Activated naive CD8-positive, alpha-beta T cell treated with anti-CD3 and anti-CD28 coated beads, Interleukin-2, amount 10 ng/mL, durations not matched to agents 7 days and 5 days (primary cell): ENCODE measurements at regions of chr11 and their contacts with region 1.

Region 1: GRCh38 chr11:85627998-85628770 is at the start of gene TMEM126B:
- DNase-seq: peak; percentile 94
- ATAC-seq: peak; percentile 99
- H3K4me3 Mint-ChIP-seq: peak within 1 kb of the TSS; percentile 97
- H3K27ac Mint-ChIP-seq: peak within 1 kb of the TSS; percentile 95
- H3K4me1 Mint-ChIP-seq: peaks cover 29% of the 10 kb centered on the region
- H3K27me3 Mint-ChIP-seq: peaks cover 2% of the 10 kb centered on the region
- total RNA-seq, gene TMEM126B: 52.8 to 53.9 TPM

Region 2: GRCh38 chr11:85647604-85648299 is 19.6 kb after region 1 on chr11 and contains the start of gene TMEM126A:
- POLR2A ChIA-PET with region 1: interaction called, 48 read pairs
- DNase-seq: peak; percentile 93
- ATAC-seq: peak; percentile 98
- H3K4me3 Mint-ChIP-seq: peak within 1 kb of the TSS; percentile 99
- H3K27ac Mint-ChIP-seq: peak within 1 kb of the TSS; percentile 99
- H3K4me1 Mint-ChIP-seq: peaks cover 27% of the 10 kb centered on the region
- H3K27me3 Mint-ChIP-seq: peaks cover 21% of the 10 kb centered on the region
- total RNA-seq, gene TMEM126A: 27.2 to 28.8 TPM

Region 3: GRCh38 chr11:85652786-85653447 is 24.7 kb after region 1 on chr11:
- POLR2A ChIA-PET with region 1: interaction called, 48 read pairs
- DNase-seq: no peak
- ATAC-seq: peak; percentile 40
- H3K4me3 Mint-ChIP-seq: peak overlapping the region; percentile 42
- H3K27ac Mint-ChIP-seq: peak overlapping the region; percentile 68
- H3K4me1 Mint-ChIP-seq: peaks cover 35% of the 10 kb centered on the region
- H3K27me3 Mint-ChIP-seq: no peaks in the 10 kb centered on the region

Region 4: GRCh38 chr11:86244522-86245368 is 616.6 kb after region 1 on chr11 and contains the start of gene EED:
- POLR2A ChIA-PET with region 1: interaction called, 12 read pairs
- DNase-seq: peak; percentile 94
- ATAC-seq: peak; percentile 81
- H3K4me3 Mint-ChIP-seq: no peak within 1 kb of the TSS
- H3K27ac Mint-ChIP-seq: no peak within 1 kb of the TSS
- H3K4me1 Mint-ChIP-seq: peaks cover 29% of the 10 kb centered on the region
- H3K27me3 Mint-ChIP-seq: no peaks in the 10 kb centered on the region
- total RNA-seq, gene EED: 43.4 TPM